KBM-7 (cell line): ENCODE measurements at regions of chr17 and their contacts with region 1.

Region 1: GRCh38 chr17:5584383-5585286 is at the start of gene NLRP1:
- DNase-seq: peak; percentile 96

Region 2: DNA sequence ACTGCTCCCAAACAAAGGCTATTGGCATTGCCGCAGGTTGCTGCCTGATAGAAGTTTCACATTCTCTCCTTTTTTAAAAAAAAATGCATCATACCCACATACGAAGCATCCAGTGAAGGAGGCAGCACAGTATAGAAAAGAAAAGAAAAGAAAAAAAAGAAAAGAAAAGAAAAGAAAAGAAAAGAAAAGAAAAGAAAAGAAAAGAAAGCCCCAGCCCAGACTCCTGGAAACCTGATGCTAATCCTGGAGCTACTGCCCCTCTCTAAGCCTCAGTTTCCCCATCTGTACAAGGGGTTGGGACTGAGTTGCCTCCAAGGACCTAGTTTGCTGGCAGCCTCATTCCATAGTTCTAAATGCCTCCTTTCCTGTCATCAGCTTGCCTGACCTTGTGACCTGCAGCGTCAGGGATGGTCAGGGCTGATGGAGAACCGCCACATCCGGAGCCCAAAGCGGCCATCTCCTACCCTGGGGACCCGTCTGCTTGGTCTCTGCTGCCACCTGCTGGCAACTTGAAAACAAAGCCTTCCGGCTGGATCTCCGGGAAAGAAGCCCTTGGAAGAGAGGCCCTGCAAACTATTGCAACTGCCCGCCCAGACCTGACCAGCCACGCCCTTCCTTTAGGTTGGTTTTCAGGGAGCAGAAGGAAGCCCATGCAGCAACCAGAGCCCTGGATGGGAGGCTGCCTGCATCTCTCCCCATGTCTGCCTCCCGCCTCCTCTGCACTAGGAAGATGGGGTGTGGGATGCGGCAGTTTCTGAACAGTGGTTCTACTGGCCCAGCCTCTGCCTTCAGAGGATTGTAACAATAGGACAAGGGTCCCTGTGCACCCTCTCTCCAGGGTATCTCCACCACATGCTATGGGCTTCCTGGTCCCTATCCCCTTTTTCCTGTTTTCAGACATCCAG is 837.3 kb after region 1 on chr17:
- in situ Hi-C with region 1: loop called (anchors 25 kb)
- DNase-seq: peak; percentile 71